Activated CD8-positive, alpha-beta T cell treated with anti-CD3 and anti-CD28 coated beads, Interleukin-2, amount 10 ng/mL, durations not matched to agents 7 days and 5 days (primary cell): ENCODE measurements at regions of chr22 and their contacts with region 1.

Region 1: GRCh38 chr22:23289851-23290724 is 109.8 kb downstream of the BCR start:
- DNase-seq: peak; percentile 63
- ATAC-seq: peak; percentile 49
- H3K4me3 Mint-ChIP-seq: no peak overlapping the region
- H3K27ac Mint-ChIP-seq: no peak overlapping the region
- H3K4me1 Mint-ChIP-seq: no peaks in the 10 kb centered on the region
- H3K27me3 Mint-ChIP-seq: no peaks in the 10 kb centered on the region

Region 2: DNA sequence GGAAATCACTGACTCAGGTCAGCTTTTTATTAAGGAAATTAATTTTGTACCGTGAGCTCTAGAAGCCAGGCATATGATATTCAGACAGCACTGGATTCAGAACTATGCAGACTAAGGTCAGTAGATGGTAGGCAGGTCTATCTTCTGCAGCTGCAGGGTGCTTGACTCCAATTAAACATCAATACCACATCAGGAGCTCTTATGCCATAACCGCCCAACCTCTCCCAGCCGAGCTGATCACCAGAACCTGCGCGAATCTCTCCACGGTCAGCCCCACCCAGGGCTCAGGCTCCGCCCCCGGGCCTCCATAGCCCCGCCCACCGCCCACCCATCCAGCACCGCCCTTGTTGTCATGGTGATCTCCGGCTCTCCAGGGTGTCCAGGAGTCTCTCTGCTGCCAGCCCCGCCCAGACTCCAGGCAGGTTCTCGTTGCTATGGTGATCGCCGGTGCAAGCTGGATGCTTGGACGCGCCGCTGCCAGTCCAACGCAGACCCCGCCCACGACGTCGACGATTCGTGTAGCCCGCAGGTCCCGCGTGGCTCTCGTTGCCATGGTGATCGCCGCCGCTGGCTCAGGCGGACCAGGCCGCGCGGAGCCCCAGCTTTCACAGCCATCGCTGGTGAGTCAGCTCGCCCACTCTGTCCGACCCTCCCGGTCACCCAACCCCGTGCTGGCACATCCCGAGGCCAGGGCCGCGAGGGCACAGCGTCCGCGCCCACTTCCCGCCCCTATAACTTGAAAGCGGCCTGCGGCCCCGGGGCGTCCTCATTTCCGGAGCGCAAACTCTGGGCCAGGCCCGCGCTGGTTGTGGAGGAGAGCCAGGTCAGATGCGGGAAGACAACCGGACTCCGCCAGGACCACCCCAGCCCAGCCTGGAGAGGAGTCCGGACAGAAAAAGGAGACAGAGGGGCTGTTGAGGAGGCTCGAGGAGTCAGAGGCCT is 144.9 kb before region 1 on chr22 and contains the start of gene RAB36:
- CTCF ChIA-PET with region 1: interaction called, 10 read pairs
- POLR2A ChIA-PET with region 1: no interaction called
- DNase-seq: peak; percentile 92
- ATAC-seq: peak; percentile 63
- H3K4me3 Mint-ChIP-seq: peak within 1 kb of the TSS; percentile 63
- H3K27ac Mint-ChIP-seq: peak within 1 kb of the TSS; percentile 49
- H3K4me1 Mint-ChIP-seq: peaks cover 45% of the 10 kb centered on the region
- H3K27me3 Mint-ChIP-seq: peaks cover 5% of the 10 kb centered on the region
- total RNA-seq, gene RAB36: 0.79 to 1.0 TPM

Region 3: GRCh38 chr22:23178512-23179254 is 111.4 kb before region 1 on chr22:
- CTCF ChIA-PET with region 1: interaction called, 280 read pairs
- POLR2A ChIA-PET with region 1: no interaction called
- DNase-seq: peak; percentile 69
- ATAC-seq: peak; percentile 17
- H3K4me3 Mint-ChIP-seq: peak overlapping the region; percentile 74
- H3K27ac Mint-ChIP-seq: no peak overlapping the region
- H3K4me1 Mint-ChIP-seq: peaks cover 61% of the 10 kb centered on the region
- H3K27me3 Mint-ChIP-seq: peaks cover 5% of the 10 kb centered on the region

Region 4: GRCh38 chr22:23199159-23199558 is 90.9 kb before region 1 on chr22:
- CTCF ChIA-PET with region 1: no interaction called
- POLR2A ChIA-PET with region 1: no interaction called
- DNase-seq: no peak
- ATAC-seq: no peak
- H3K4me3 Mint-ChIP-seq: no peak overlapping the region
- H3K27ac Mint-ChIP-seq: no peak overlapping the region
- H3K4me1 Mint-ChIP-seq: no peaks in the 10 kb centered on the region
- H3K27me3 Mint-ChIP-seq: no peaks in the 10 kb centered on the region

Region 5: DNA sequence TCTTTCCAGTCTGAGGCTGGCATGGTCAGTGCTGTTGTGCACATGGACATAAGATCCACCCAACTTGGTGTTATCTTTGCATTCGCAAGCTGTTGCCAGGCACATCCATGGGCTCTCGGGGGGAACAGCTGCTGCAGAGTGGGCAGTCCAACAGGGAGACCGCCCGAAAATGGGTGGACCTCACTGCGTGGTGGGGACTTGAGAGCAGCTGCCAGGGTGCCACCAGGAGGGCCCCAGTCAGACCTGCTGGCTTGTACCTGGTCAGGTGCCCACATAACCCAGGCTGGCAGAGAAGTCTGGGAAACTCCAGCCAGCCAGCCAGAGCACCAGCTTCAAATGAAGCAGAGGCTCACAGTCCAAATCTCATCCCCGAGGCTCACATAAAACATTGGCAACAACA is 10.4 kb after region 1 on chr22:
- CTCF ChIA-PET with region 1: interaction called, 10 read pairs
- POLR2A ChIA-PET with region 1: no interaction called
- DNase-seq: no peak
- ATAC-seq: no peak
- H3K4me3 Mint-ChIP-seq: no peak overlapping the region
- H3K27ac Mint-ChIP-seq: no peak overlapping the region
- H3K4me1 Mint-ChIP-seq: no peaks in the 10 kb centered on the region
- H3K27me3 Mint-ChIP-seq: no peaks in the 10 kb centered on the region